ENCODE measurements at regions of chr17 and their contacts with region 1.

Region 1: DNA sequence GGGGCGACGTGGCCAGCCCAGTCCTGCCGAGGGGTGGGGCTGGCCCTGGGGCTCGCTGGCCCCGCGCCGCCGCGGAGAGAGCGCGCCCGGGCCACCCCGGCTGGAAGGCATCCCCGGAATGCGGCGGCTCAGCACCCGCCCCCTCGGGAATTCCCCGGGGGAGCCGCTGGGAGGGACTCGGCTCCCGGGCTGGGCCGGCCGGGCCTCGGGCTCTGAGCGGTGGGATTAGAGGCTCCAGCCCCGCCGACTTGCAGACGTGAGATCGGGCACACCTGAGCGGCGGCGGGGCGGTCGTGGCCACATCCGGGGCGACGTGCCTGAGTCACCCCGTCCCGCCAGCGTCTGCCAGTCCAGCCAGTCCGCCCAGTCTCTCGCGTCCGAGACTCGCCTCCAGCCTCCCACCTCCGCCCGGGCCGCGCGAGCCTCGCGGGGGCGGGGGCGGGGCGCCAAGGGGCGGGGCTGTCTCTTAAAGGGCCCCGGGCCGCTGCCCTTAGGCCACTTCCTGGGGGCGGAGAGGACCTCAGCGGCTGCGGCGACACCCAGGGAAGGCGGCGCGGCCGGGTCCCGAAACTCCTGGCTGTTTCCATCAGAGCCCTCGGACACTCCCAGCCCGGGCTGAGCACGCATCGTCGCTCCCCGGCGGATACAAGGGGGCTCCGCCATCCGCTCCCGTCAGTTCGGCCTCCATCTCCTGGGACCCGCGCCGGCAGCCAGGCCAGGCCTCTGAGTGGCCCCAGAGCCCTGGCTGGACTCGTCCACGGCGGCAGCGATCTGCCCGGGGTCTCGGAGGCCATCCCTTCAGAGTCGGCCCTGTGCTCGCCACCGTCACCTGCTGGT is at the start of gene KCTD11:
- DNase-seq: peak; percentile 72 to 91 (median 82)
- H3K4me3 ChIP-seq: peak within 1 kb of the TSS; percentile 53 to 95 (median 82)
- H3K27ac ChIP-seq: peak within 1 kb of the TSS; percentile 63 to 99 (median 96)
- H3K27me3 ChIP-seq: peaks cover 0 to 9% (median 0%) of the 10 kb centered on the region in 45 donors
- CTCF ChIP-seq: peak in 27 of 56 donors; percentile 4 to 54 (median 32)
- total RNA-seq, gene KCTD11: 2.0 to 7.9 (median 4.1) TPM

Region 2: DNA sequence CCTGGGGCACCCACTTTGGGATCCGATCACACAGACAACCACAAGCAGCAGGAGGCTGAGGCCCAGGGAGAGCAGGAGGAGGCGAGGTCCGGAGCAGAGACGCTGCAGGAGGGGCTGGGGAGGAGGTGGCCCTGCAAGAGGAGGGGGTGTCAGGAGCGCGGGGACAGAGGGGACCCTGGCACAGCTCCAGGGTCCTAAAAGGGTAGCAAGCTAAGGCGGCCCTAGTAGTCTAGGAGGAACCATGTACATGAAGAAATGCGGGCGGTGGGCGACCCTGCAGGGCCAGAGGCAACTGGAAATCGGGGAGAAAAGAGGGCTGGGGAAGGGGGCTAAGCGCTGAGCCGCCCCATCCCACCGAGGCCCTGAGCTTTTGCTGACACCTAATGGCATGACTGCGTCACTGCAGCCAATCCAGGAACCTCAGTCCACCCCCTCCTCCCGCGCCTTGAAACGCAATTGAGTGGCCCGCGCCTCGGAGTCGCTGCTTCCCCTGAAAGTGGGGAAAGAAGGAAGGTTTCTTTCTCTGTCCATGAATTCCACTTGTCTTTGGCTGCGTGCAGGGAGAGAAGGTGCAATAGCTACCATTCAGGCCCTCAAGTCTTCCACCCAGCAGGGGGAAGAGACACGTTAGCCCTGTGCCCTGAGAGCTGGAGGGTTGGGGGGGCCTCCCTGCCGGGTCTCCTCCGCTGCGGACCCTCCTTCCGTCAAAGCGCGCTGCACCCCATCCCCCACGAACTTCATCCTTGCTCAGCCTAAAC is 174.5 kb before region 1 on chr17:
- intact Hi-C with region 1: no loop called
- DNase-seq: peak; percentile 42 to 84 (median 79)
- H3K4me3 ChIP-seq: peak overlapping the region; percentile 14 to 71 (median 53)
- H3K27ac ChIP-seq: peak overlapping the region in 35 of 59 donors; percentile 18 to 86 (median 59)
- H3K27me3 ChIP-seq: peaks cover 0 to 5% (median 0%) of the 10 kb centered on the region in 45 donors
- CTCF ChIP-seq: peak; percentile 58 to 88 (median 81)

Region 3: DNA sequence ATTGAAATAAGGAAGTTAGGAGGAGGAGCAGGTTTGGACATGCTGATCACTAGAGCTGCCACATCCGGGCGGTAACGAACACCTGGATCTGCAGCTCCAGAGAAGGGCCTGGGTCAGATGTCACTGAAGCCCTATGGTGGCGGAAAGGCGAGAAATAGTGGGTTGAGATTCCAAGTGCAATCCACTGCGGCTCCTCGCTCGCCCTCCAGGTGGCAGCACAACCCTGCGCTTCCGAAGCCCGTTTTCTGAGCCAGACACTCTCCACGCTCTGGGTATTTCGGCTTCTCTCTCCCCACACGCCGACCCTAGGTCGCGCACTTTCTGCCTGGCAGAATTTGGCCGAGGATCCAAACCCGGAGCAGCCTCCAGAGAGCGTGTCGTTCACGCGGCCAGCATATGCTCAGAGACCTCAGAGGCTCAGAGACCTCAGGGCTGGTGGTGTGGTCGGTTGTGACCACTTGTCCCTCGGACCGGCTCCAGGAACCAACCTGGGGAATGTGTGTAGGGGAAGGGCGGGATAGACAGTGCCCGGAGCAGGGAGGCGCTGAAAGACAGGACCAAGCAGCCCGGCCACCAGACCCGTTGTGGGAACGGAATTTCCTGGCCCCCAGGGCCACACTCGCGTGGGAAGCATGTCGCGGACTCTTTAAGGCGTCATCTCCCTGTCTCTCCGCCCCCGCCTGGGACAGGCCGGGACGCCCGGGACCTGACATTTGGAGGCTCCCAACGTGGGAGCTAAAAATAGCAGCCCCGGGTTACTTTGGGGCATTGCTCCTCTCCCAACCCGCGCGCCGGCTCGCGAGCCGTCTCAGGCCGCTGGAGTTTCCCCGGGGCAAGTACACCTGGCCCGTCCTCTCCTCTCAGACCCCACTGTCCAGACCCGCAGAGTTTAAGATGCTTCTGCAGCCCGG is 71.1 kb before region 1 on chr17:
- intact Hi-C with region 1: loop called in 1 of 2 experiments (anchors 2 kb)
- DNase-seq: peak; percentile 65 to 87 (median 80)
- H3K4me3 ChIP-seq: peak overlapping the region; percentile 18 to 65 (median 47)
- H3K27ac ChIP-seq: peak overlapping the region in 48 of 59 donors; percentile 6 to 90 (median 70)
- H3K27me3 ChIP-seq: peaks cover 0 to 28% (median 13%) of the 10 kb centered on the region in 45 donors
- CTCF ChIP-seq: peak; percentile 76 to 99 (median 94)

Region 4: GRCh38 chr17:7394452-7395191 is 42.7 kb after region 1 on chr17 and contains the start of gene PLSCR3:
- intact Hi-C with region 1: loop called in 1 of 2 experiments (anchors 5 kb)
- DNase-seq: peak; percentile 71 to 92 (median 83)
- H3K4me3 ChIP-seq: peak within 1 kb of the TSS; percentile 55 to 98 (median 90)
- H3K27ac ChIP-seq: peak within 1 kb of the TSS; percentile 61 to 98 (median 93)
- H3K27me3 ChIP-seq: no peaks in the 10 kb centered on the region
- CTCF ChIP-seq: peak in 46 of 56 donors; percentile 16 to 69 (median 41)
- total RNA-seq, gene PLSCR3: 7.3 to 23.9 (median 14.2) TPM

Region 5: GRCh38 chr17:7403977-7404736 is 52.3 kb after region 1 on chr17 and contains the start of gene TMEM256:
- intact Hi-C with region 1: loop called (anchors 5 kb)
- DNase-seq: peak; percentile 98 to 100 (median 99)
- H3K4me3 ChIP-seq: peak within 1 kb of the TSS; percentile 55 to 89 (median 79)
- H3K27ac ChIP-seq: peak within 1 kb of the TSS; percentile 66 to 97 (median 92)
- H3K27me3 ChIP-seq: no peaks in the 10 kb centered on the region
- CTCF ChIP-seq: peak in 28 of 56 donors; percentile 4 to 44 (median 24)
- total RNA-seq, gene TMEM256: 25.4 to 80.3 (median 44.3) TPM

Region 6: DNA sequence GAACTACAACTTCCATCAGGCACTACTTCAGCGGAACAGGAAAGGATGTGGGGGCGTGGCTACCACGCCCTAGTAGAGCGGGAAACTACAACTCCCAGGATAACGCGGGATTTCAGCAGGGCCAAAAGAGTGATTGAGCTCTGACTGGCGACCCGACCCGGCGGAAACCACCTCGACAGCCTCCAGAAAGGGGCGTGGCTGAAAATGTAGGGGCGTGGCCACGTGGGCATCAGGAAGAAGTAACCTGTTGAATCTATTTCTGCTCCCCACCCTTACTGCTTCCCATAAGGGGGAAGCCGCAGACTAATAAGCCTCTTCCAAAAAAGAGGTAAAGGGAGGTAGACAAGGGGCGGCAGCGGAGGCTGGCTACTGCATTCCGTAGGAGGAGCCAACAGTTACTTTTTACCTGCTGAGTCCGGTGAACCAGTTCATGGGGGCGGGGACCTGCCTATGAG is 83.4 kb after region 1 on chr17 and contains the start of gene TMEM102:
- intact Hi-C with region 1: loop called in 1 of 2 experiments (anchors 2 kb)
- DNase-seq: peak; percentile 78 to 96 (median 92)
- H3K4me3 ChIP-seq: peak within 1 kb of the TSS in 58 of 59 donors; percentile 28 to 74 (median 52)
- H3K27ac ChIP-seq: peak within 1 kb of the TSS in 23 of 59 donors; percentile 5 to 79 (median 30)
- H3K27me3 ChIP-seq: peaks cover 0 to 58% (median 33%) of the 10 kb centered on the region in 45 donors
- CTCF ChIP-seq: peak in 21 of 56 donors; percentile 8 to 54 (median 19)
- total RNA-seq, gene TMEM102: 0.24 to 3.3 (median 0.97) TPM in 113 of 120 experiments, not detected in the others

Region 7: DNA sequence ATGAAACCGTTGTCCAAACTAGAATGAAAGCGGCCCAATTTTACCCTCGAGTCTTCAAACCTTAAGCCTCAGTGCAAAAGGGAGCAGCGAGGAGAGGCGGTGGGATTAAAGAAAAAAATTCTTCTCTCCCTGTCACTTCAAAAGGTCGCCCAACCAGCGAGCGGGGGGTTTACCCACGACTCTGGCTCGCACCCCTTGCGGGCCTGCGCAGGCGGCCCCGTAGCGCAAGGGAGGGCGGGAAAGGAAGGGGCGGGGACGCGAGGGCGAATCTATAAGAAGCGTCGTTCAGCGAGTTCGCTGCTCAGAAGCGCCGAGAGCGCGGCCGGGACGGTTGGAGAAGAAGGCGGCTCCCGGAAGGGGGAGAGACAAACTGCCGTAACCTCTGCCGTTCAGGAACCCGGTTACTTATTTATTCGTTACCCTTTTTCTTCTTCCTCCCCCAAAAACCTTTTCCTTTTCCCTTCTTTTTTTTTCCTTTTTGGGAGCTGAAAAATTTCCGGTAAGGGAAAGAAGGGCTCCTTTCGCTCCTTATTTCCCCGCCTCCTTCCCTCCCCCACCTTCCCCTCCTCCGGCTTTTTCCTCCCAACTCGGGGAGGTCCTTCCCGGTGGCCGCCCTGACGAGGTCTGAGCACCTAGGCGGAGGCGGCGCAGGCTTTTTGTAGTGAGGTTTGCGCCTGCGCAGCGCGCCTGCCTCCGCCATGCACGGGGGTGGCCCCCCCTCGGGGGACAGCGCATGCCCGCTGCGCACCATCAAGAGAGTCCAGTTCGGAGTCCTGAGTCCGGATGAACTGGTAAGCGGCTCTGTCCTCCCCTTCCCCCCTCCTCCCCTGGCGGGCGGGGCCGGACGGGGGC is 132.4 kb after region 1 on chr17 and contains the start of gene POLR2A:
- intact Hi-C with region 1: loop called (anchors 5 to 10 kb)
- DNase-seq: peak; percentile 96 to 98 (median 97)
- H3K4me3 ChIP-seq: peak within 1 kb of the TSS; percentile 61 to 98 (median 84)
- H3K27ac ChIP-seq: peak within 1 kb of the TSS; percentile 94 to 100 (median 100)
- H3K27me3 ChIP-seq: no peaks in the 10 kb centered on the region
- CTCF ChIP-seq: peak in 10 of 56 donors; percentile 4 to 61 (median 44)
- total RNA-seq, gene POLR2A: 83.5 to 163 (median 124) TPM

Region 8: DNA sequence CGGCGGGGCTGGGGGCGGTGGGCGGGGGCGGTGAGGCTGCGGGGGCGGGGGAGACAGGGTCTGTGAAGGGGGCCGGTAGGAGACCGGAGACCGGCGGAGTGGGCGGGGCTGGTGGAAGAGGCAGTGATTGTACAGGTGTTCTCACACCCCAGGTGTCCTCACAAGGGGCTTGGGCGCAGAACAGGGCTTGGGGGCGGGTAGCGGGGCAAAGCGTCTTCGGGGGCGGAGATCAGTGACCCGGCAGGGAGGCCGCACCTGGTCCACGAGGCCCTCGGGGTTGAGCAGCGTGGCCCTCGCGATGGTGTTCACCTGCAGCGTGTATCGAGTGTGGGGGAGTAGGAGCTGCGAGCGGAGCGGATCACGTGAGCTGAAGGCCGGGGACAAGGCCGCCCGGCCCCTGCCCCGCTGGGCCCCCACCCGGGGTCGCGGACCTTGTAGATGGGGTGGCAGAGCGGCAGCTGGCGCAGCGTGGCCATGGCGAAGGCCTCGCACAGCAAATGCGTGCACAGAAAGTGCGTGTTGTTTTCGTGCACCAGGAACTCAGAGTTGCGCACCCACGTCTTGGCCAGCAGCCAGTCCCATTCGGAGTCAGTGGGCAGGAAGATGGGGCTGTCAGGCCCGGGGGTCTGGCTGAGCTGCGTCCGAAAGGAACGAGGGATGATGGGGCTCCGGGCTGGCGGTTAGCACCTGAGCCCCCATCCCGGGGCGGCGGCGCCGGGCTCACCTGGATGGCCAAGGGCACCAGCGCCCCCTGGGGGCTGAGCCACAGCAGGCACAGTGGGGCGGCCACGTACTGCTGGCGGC is 758.0 kb after region 1 on chr17:
- intact Hi-C with region 1: no loop called
- DNase-seq: peak in 6 of 10 donors; percentile 25 to 60 (median 45)
- H3K4me3 ChIP-seq: peak overlapping the region; percentile 10 to 63 (median 44)
- H3K27ac ChIP-seq: peak overlapping the region in 2 of 59 donors; percentile 18 to 68
- H3K27me3 ChIP-seq: peaks cover 0 to 34% (median 8%) of the 10 kb centered on the region in 45 donors
- CTCF ChIP-seq: peak; percentile 36 to 80 (median 66)